AG04450 (cell line): ENCODE measurements at regions of chr19 and their contacts with region 1.

Region 1: GRCh38 chr19:48970923-48971395 is 5.8 kb downstream of the FTL start:
- DNase-seq: no peak
- H3K4me3 ChIP-seq: no peak overlapping the region
- H3K27ac ChIP-seq: no peak overlapping the region
- H3K27me3 ChIP-seq: no peaks in the 10 kb centered on the region
- CTCF ChIP-seq: peak; percentile 94

Region 2: DNA sequence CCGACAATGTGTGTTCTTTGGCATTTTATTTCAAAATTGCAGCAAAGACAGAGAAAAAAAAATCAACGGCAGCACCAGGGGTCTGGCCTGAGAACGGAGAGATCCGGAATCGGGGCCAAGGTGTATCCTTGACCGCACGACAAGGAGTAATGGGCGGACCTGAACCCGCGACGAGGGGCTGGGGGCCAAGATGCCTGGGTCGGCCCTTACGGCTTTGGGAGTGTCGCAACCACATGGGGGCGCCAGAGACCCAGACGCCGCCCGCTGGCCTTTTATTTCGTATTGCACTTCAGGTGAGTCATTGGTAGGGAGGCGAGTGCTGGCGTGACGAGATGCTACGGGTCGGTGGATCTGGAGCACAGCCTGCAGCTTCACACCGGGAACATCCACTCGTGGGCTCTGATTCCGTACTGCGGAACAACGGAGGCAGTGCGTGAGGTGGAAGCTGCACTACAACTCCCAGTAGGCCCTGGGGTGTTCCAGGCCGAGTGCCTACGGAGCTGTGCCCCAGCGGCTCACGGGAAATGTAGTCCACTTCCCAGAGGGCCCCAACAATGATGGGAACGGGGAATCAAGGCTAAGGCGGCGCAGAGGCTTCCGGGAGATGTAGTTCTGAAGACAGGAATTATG is 175.8 kb before region 1 on chr19:
- CTCF ChIA-PET with region 1: interaction called, 38 read pairs
- POLR2A ChIA-PET with region 1: interaction called, 4 read pairs
- DNase-seq: peak; percentile 84
- H3K4me3 ChIP-seq: peak overlapping the region; percentile 63
- H3K27ac ChIP-seq: peak overlapping the region; percentile 87
- H3K27me3 ChIP-seq: no peaks in the 10 kb centered on the region
- CTCF ChIP-seq: peak; percentile 95

Region 3: GRCh38 chr19:48835734-48836088 is 135.2 kb before region 1 on chr19:
- CTCF ChIA-PET with region 1: interaction called, 15 read pairs
- POLR2A ChIA-PET with region 1: interaction called, 4 read pairs
- DNase-seq: no peak
- H3K4me3 ChIP-seq: peak overlapping the region; percentile 54
- H3K27ac ChIP-seq: peak overlapping the region; percentile 53
- H3K27me3 ChIP-seq: no peaks in the 10 kb centered on the region
- CTCF ChIP-seq: peak; percentile 92

Region 4: GRCh38 chr19:48872182-48872883 is 98.6 kb before region 1 on chr19 and contains the start of gene PPP1R15A:
- CTCF ChIA-PET with region 1: interaction called, 9 read pairs
- POLR2A ChIA-PET with region 1: interaction called, 83 read pairs
- DNase-seq: peak; percentile 96
- H3K4me3 ChIP-seq: peak within 1 kb of the TSS; percentile 99
- H3K27ac ChIP-seq: peak within 1 kb of the TSS; percentile 100
- H3K27me3 ChIP-seq: no peaks in the 10 kb centered on the region
- CTCF ChIP-seq: no peak
- polyA plus RNA-seq, gene PPP1R15A: 36.5 and 37.2 TPM in 2 replicates

Region 5: GRCh38 chr19:48982280-48982679 is 11.3 kb after region 1 on chr19:
- CTCF ChIA-PET with region 1: interaction called, 20 read pairs
- POLR2A ChIA-PET with region 1: interaction called, 10 read pairs
- DNase-seq: no peak
- H3K4me3 ChIP-seq: no peak overlapping the region
- H3K27ac ChIP-seq: no peak overlapping the region
- H3K27me3 ChIP-seq: no peaks in the 10 kb centered on the region
- CTCF ChIP-seq: no peak